CD4-positive, alpha-beta memory T cell (primary cell): ENCODE measurements at regions of chr2 and their contacts with region 1.

Region 1: GRCh38 chr2:205947621-205948495 is 138.1 kb downstream of the INO80D start:
- DNase-seq: peak in 4 of 5 donors; percentile 18 to 42 (median 33)
- H3K4me3 ChIP-seq: no peak overlapping the region
- H3K4me3 Mint-ChIP-seq: peak overlapping the region in 1 of 8 donors; percentile 23
- H3K27ac ChIP-seq: no peak overlapping the region
- H3K27ac Mint-ChIP-seq: no peak overlapping the region
- H3K4me1 ChIP-seq: no peaks in the 10 kb centered on the region
- H3K4me1 Mint-ChIP-seq: peaks cover 0 to 5% (median 0%) of the 10 kb centered on the region in 4 donors
- H3K27me3 ChIP-seq: no peaks in the 10 kb centered on the region
- H3K27me3 Mint-ChIP-seq: peaks cover 8 to 17% of the 10 kb centered on the region in 2 donors

Region 2: GRCh38 chr2:204796581-204796980 is 1151.3 kb before region 1 on chr2:
- CTCF ChIA-PET with region 1: no interaction called
- POLR2A ChIA-PET with region 1: no interaction called
- intact Hi-C with region 1: no loop called
- DNase-seq: no peak
- H3K4me3 ChIP-seq: no peak overlapping the region
- H3K4me3 Mint-ChIP-seq: no peak overlapping the region
- H3K27ac ChIP-seq: no peak overlapping the region
- H3K27ac Mint-ChIP-seq: no peak overlapping the region
- H3K4me1 ChIP-seq: no peaks in the 10 kb centered on the region
- H3K4me1 Mint-ChIP-seq: no peaks in the 10 kb centered on the region
- H3K27me3 ChIP-seq: no peaks in the 10 kb centered on the region
- H3K27me3 Mint-ChIP-seq: peaks cover 2 to 12% of the 10 kb centered on the region in 2 donors

Region 3: GRCh38 chr2:205766779-205767359 is 181.0 kb before region 1 on chr2:
- CTCF ChIA-PET with region 1: interaction called, 3 read pairs
- POLR2A ChIA-PET with region 1: no interaction called
- intact Hi-C with region 1: loop called (anchors 5 kb)
- DNase-seq: peak in 4 of 5 donors; percentile 13 to 32 (median 22)
- H3K4me3 ChIP-seq: no peak overlapping the region
- H3K4me3 Mint-ChIP-seq: peak overlapping the region in 1 of 8 donors; percentile 17
- H3K27ac ChIP-seq: no peak overlapping the region
- H3K27ac Mint-ChIP-seq: peak overlapping the region in 1 of 7 donors; percentile 23
- H3K4me1 ChIP-seq: no peaks in the 10 kb centered on the region
- H3K4me1 Mint-ChIP-seq: peaks cover 0 to 15% (median 3%) of the 10 kb centered on the region in 4 donors
- H3K27me3 ChIP-seq: no peaks in the 10 kb centered on the region
- H3K27me3 Mint-ChIP-seq: peaks cover 27 to 35% of the 10 kb centered on the region in 2 donors

Region 4: GRCh38 chr2:205934443-205934842 is 13.4 kb before region 1 on chr2:
- CTCF ChIA-PET with region 1: interaction called, 55 read pairs
- POLR2A ChIA-PET with region 1: no interaction called
- intact Hi-C with region 1: no loop called
- DNase-seq: no peak
- H3K4me3 ChIP-seq: no peak overlapping the region
- H3K4me3 Mint-ChIP-seq: no peak overlapping the region
- H3K27ac ChIP-seq: no peak overlapping the region
- H3K27ac Mint-ChIP-seq: no peak overlapping the region
- H3K4me1 ChIP-seq: no peaks in the 10 kb centered on the region
- H3K4me1 Mint-ChIP-seq: no peaks in the 10 kb centered on the region
- H3K27me3 ChIP-seq: peaks cover 4% of the 10 kb centered on the region
- H3K27me3 Mint-ChIP-seq: peaks cover 14 to 17% of the 10 kb centered on the region in 2 donors